ENCODE measurements at regions of chr5 and their contacts with region 1.

Region 1: DNA sequence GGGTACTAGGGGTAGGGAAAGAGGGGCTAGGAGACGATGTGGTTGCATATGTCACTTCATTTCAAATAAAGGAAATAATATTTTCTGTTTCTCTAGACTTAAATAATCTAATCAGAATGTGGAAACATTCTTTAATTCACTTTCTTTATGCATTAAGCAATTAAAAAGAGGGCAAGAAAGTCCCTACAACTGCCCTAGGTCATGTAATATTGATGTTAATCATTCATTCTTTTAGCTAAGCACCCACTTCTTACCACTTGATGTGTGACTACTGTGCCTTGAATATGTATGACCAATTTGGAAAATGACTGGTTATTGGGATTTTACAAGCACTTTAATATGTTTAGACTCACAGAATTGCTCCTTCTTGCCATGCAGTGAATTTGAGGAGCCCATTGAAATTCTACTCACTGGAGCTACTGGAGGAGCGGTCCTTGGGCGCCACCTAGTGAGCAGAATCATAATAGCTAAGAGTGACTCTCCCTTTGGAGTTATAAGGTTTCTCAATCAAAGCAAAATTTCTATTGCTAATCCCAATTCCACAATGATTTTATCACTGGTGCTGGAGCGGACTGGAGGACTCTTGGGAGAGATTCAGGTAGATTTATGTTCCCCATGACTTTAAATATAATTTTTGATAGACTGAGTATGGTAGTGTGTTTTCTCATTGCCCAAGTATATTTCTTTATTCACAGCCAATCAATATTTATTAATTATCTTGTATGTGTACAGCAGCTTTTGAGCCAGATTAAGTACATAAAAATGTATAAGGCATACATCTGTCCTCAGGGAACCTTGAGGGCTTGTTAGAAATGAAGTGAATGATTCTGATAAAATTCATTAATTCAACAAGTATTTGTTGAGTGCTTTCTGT is 225.1 kb downstream of the ADGRV1 start:
- DNase-seq: peak; percentile 53
- ATAC-seq: peak; percentile 87 to 89
- H3K4me3 ChIP-seq: no peak overlapping the region
- H3K27ac ChIP-seq: no peak overlapping the region
- H3K4me1 ChIP-seq: no peaks in the 10 kb centered on the region
- H3K27me3 ChIP-seq: no peaks in the 10 kb centered on the region
- CTCF ChIP-seq: peak; percentile 90

Region 2: DNA sequence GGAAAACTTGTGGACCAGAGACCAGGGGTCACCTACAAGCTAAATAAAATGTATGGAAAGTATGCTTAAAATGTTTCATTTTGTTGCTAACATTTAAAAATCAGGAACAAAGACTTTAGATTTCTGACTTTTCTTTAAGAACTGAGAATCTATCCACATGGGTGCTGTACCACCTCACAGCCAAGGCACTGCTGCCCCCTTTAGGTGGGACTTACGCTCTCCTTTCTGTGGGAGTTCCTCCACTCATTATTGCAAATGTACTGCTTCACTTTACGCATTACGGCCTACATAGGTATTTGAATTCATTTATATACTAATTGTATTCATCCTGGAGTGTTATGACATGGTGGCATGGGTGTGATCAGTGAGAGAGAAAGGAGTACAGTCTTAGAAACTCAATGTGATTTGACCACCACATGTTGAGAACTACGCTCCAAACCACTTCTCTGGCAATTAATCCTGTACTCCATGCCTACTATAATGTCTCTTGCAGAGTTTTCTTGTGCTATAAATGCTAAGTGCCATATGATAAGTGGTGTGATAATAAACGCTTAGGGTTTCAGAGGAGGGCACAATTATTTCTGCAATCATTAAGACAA is 349.5 kb before region 1 on chr5:
- intact Hi-C with region 1: loop called (anchors 10 kb)
- DNase-seq: peak; percentile 59
- ATAC-seq: peak; percentile 69 to 73
- H3K4me3 ChIP-seq: no peak overlapping the region
- H3K27ac ChIP-seq: no peak overlapping the region
- H3K4me1 ChIP-seq: peaks cover 4% of the 10 kb centered on the region
- H3K27me3 ChIP-seq: no peaks in the 10 kb centered on the region
- CTCF ChIP-seq: peak; percentile 66